ENCODE measurements at regions of chr12 and their contacts with region 1.

Region 1: DNA sequence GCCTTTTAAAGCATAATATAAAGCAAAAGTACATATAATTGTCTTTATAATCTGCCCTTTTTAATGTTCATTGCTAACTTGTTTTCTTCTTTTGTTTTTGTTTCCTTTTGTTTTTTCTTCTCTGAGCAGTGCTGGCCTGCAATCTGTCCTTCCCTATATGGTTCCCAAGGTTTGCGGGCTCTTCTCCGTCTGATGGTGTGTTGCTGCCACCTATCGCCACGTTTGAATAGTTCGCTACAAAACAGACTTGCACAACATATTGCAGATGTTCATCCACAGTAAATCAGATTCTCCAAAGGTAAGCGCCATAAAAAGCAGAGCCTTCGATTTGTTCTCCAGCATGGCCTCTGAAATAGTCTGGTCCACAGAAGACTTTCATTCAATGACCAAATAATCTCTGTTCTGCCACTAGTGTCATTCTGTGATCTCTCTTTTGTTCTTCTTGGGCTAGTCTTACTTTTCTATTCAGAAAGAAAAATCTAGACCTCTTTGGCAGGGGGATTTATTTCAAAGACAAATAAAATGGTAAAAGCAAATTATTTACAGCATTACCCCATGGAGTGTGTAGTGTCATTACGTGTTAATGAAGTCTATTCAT is 33.5 kb downstream of the C12orf50 start:
- DNase-seq: no peak
- ATAC-seq: peak; percentile 96
- H3K4me3 ChIP-seq: no peak overlapping the region
- H3K27ac ChIP-seq: no peak overlapping the region
- H3K4me1 ChIP-seq: no peaks in the 10 kb centered on the region
- H3K27me3 ChIP-seq: no peaks in the 10 kb centered on the region
- CTCF ChIP-seq: peak; percentile 65 to 83 (median 74)
- EP300 ChIP-seq: no peak
- POLR2A ChIP-seq: no peak
- RAD21 ChIP-seq: peak; percentile 81

Region 2: GRCh38 chr12:87274594-87275245 is 721.0 kb before region 1 on chr12:
- CTCF ChIA-PET with region 1: no interaction called
- POLR2A ChIA-PET with region 1: no interaction called
- RAD21 ChIA-PET with region 1: no interaction called
- SMC1A ChIA-PET with region 1: no interaction called
- in situ Hi-C with region 1: no loop called
- intact Hi-C with region 1: loop called (anchors 5 kb)
- DNase-seq: no peak
- ATAC-seq: peak; percentile 84
- H3K4me3 ChIP-seq: no peak overlapping the region
- H3K27ac ChIP-seq: no peak overlapping the region
- H3K4me1 ChIP-seq: no peaks in the 10 kb centered on the region
- H3K27me3 ChIP-seq: no peaks in the 10 kb centered on the region
- CTCF ChIP-seq: peak in 2 of 3 experiments; percentile 51 to 52; a peak in 4 of 6 replicates
- EP300 ChIP-seq: no peak
- POLR2A ChIP-seq: no peak
- RAD21 ChIP-seq: peak; percentile 41

Region 3: DNA sequence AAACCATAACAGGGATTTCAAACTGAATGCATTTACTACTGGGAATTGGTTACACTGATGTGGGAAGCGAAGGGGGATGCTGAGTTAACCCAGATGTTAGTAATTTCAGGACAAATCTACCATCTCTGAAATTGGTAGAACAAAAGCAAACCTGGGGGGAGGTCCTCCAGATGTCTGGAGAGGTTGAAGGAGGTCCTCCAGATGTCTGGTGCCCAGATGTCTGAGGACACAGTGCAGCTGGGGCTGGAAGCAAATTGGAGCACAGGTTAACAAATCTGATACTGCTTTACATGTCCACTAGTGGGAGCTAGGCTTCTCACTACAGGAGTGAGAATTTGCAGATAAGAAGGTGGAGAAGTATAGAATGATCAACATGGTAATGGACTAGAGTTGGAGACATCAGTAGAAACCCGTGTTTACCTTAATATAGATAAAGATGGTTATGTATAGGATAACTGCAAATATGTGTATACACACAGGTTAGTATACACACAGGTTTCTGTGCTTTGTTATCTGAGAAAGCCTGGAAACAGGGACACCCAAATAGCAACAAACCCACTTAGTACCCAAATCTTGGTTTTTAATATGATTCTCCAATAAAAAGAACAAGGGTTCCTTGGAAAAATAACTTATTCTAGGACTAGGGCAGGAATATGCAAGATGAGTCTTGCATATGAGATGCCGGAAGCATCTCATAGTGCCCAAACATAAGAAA is 128.9 kb before region 1 on chr12:
- CTCF ChIA-PET with region 1: no interaction called
- POLR2A ChIA-PET with region 1: no interaction called
- RAD21 ChIA-PET with region 1: no interaction called
- SMC1A ChIA-PET with region 1: interaction called, 3 read pairs
- in situ Hi-C with region 1: no loop called
- intact Hi-C with region 1: loop called (anchors 2 kb)
- DNase-seq: no peak
- ATAC-seq: peak; percentile 75
- H3K4me3 ChIP-seq: no peak overlapping the region
- H3K27ac ChIP-seq: no peak overlapping the region
- H3K4me1 ChIP-seq: no peaks in the 10 kb centered on the region
- H3K27me3 ChIP-seq: no peaks in the 10 kb centered on the region
- CTCF ChIP-seq: peak; percentile 34 to 49 (median 40); a peak in 3 of 6 replicates
- EP300 ChIP-seq: no peak
- POLR2A ChIP-seq: no peak
- RAD21 ChIP-seq: peak; percentile 38

Measured in GM12878 (cell line).